Panc1 (cell line): ENCODE measurements at regions of chr5 and their contacts with region 1.

Region 1: GRCh38 chr5:104774372-104774771 is 1211.8 kb upstream of the NUDT12 start:
- DNase-seq: no peak
- ATAC-seq: no peak
- H3K4me3 ChIP-seq: no peak overlapping the region
- H3K27ac ChIP-seq: no peak overlapping the region
- H3K4me1 ChIP-seq: no peaks in the 10 kb centered on the region
- H3K27me3 ChIP-seq: no peaks in the 10 kb centered on the region
- CTCF ChIP-seq: no peak

Region 2: DNA sequence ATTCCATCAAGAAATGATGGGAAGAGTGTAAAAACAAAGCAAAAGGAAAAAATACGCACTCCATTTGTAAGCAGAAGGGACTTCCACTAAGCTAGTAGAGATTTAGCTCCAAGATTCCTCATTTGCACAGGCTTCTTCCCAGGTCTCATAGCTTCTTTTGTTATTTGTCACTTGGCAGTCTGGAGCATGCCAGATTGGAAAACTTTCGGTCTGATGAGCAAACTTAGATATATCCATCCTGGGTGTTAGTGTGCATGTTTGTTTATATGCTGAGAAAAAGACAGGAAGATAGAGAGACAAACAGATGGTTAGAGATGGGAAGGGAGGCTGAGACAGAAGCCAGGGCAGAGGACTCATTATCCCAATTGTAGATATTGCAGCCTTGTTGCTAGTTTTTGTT is 432.7 kb after region 1 on chr5:
- CTCF ChIA-PET with region 1: no interaction called
- POLR2A ChIA-PET with region 1: interaction called, 13 read pairs
- in situ Hi-C with region 1: no loop called
- intact Hi-C with region 1: no loop called
- DNase-seq: no peak
- ATAC-seq: no peak
- H3K4me3 ChIP-seq: no peak overlapping the region
- H3K27ac ChIP-seq: no peak overlapping the region
- H3K4me1 ChIP-seq: no peaks in the 10 kb centered on the region
- H3K27me3 ChIP-seq: no peaks in the 10 kb centered on the region
- CTCF ChIP-seq: no peak